OCI-LY7 (cell line): ENCODE measurements at regions of chr6 and their contacts with region 1.

Region 1: DNA sequence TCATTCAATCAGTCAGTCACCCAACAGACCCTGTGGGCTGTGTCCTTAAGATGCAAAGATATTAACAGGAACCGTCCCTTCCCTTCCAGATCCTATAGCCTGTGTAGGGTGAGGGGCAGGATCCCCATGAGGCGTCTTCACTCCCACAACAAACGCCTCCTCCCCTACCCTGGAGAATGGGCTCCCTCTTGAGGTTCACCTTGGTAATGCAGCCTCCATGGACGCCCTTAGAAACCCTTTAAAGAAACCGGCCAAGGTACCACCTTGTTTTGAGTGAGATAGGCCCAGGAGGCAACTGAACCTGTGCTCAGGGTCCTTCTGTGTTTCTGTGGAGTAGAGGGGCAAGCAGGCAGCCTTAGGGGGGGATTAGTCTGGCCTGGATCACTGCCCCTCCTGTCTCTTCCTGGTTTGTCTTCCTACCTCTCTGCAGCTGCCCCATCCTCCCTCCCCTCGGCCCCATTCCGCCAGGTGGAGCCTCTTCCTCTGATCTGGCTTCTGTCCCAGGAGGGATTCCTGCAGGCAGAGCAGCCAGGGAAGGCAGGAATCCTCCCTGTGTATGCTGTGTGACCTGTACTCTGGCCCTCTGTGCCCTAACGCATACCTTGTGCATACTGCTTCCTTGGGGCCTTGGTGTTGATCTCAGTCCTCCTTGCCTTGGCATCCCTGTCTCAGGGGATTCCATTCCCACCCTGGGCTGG is 6.6 kb upstream of the GUCA1A start:
- DNase-seq: peak; percentile 77
- H3K4me3 ChIP-seq: no peak overlapping the region
- H3K27ac ChIP-seq: no peak overlapping the region
- H3K4me1 ChIP-seq: no peaks in the 10 kb centered on the region
- CTCF ChIP-seq: peak; percentile 91

Region 2: GRCh38 chr6:41602864-41603608 is 563.6 kb before region 1 on chr6:
- CTCF ChIA-PET with region 1: no interaction called
- POLR2A ChIA-PET with region 1: no interaction called
- intact Hi-C with region 1: loop called (anchors 10 kb)
- DNase-seq: peak; percentile 89
- H3K4me3 ChIP-seq: peak overlapping the region; percentile 47
- H3K27ac ChIP-seq: no peak overlapping the region
- H3K4me1 ChIP-seq: peaks cover 9% of the 10 kb centered on the region
- CTCF ChIP-seq: peak; percentile 99

Region 3: DNA sequence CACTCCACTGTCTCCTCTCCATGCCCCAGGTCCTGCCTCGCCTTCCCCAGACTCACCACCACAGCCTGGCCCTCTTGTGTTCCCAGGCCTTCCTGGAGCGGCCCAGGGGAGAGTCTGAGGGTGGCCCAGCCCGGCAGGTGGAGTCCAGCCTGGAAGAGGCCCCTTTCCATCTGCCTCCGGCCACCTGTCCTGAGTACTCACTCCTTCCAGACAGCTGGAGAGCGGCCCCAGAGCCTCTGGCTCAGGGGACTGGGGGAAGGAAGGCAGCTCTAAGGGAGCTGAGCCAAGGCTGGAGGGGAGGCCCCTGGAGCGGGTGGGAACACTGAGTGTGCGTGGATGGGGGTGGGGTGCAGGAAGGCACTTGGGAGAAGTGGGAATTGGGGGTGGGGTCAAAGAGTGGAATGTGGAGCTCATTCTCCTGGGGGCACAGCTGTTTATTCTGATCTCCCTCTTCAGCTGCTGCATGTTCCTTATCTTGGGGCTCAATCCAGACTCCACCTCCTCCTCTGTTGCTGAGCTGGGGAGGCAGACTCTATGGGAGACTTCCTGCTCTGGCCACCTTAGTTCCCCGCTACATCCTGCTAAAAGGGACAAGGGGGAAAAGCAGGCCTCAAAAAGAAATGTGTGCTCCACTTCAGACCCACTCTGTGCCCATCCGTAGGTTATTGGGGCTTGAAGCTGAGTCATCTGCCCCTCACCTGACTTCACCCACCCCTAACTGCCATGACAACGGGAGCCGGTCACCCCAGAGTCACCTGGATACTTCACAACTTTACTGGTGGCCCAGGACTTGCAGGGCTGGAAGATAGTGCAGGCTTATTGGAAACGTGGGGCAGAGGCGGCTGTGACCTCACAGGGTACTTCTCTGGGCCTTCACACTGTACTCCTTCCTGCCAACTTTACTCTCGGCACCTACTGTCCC is 135.7 kb before region 1 on chr6:
- CTCF ChIA-PET with region 1: no interaction called
- POLR2A ChIA-PET with region 1: no interaction called
- intact Hi-C with region 1: no loop called
- DNase-seq: peak; percentile 50
- H3K4me3 ChIP-seq: peak overlapping the region; percentile 2
- H3K27ac ChIP-seq: peak overlapping the region; percentile 98
- H3K4me1 ChIP-seq: peaks cover 85% of the 10 kb centered on the region
- CTCF ChIP-seq: no peak

Region 4: GRCh38 chr6:42075159-42075838 is 91.3 kb before region 1 on chr6:
- CTCF ChIA-PET with region 1: no interaction called
- POLR2A ChIA-PET with region 1: no interaction called
- intact Hi-C with region 1: loop called (anchors 1 kb)
- DNase-seq: peak; percentile 57
- H3K4me3 ChIP-seq: no peak overlapping the region
- H3K27ac ChIP-seq: no peak overlapping the region
- H3K4me1 ChIP-seq: no peaks in the 10 kb centered on the region
- CTCF ChIP-seq: peak; percentile 89

Region 5: GRCh38 chr6:42142118-42142931 is 24.3 kb before region 1 on chr6 and contains the start of gene C6orf132:
- CTCF ChIA-PET with region 1: no interaction called
- POLR2A ChIA-PET with region 1: interaction called, 7 read pairs
- intact Hi-C with region 1: loop called (anchors 1 kb)
- DNase-seq: no peak
- H3K4me3 ChIP-seq: no peak within 1 kb of the TSS
- H3K27ac ChIP-seq: no peak within 1 kb of the TSS
- H3K4me1 ChIP-seq: no peaks in the 10 kb centered on the region
- CTCF ChIP-seq: no peak
- total RNA-seq, gene C6orf132: 0.03 TPM in 2 replicates

Region 6: GRCh38 chr6:43203029-43203717 is 1036.6 kb after region 1 on chr6:
- CTCF ChIA-PET with region 1: no interaction called
- POLR2A ChIA-PET with region 1: no interaction called
- intact Hi-C with region 1: no loop called
- DNase-seq: no peak
- H3K4me3 ChIP-seq: no peak overlapping the region
- H3K27ac ChIP-seq: no peak overlapping the region
- H3K4me1 ChIP-seq: no peaks in the 10 kb centered on the region
- CTCF ChIP-seq: 0 out of 2 replicates have a peak, but pooled peaks have one; percentile 12